Right cardiac atrium (tissue), 5 donors: ENCODE measurements at regions of chr6 and their contacts with region 1.

Region 1: GRCh38 chr6:31958741-31959739 is at the starts of genes NELFE and SKIC2:
- DNase-seq: peak; percentile 99
- ATAC-seq: peak; percentile 98 to 99
- H3K4me3 ChIP-seq: peak within 1 kb of the TSS; percentile 73
- H3K27ac ChIP-seq: peak within 1 kb of the TSS; percentile 67
- H3K4me1 ChIP-seq: no peaks in the 10 kb centered on the region
- H3K27me3 ChIP-seq: no peaks in the 10 kb centered on the region
- total RNA-seq, gene NELFE: 49.2 to 53.1 (median 50.9) TPM
- total RNA-seq, gene SKIC2: 36.5 to 43.1 (median 37.0) TPM

Region 2: GRCh38 chr6:31901953-31902643 is 56.9 kb before region 1 on chr6 and contains the start of gene ZBTB12:
- intact Hi-C with region 1: loop called (anchors 5 to 10 kb)
- DNase-seq: peak; percentile 91 to 97 (median 96)
- ATAC-seq: peak; percentile 82 to 89
- H3K4me3 ChIP-seq: peak within 1 kb of the TSS; percentile 78
- H3K27ac ChIP-seq: peak within 1 kb of the TSS; percentile 78
- H3K4me1 ChIP-seq: peaks cover 9% of the 10 kb centered on the region
- H3K27me3 ChIP-seq: no peaks in the 10 kb centered on the region
- total RNA-seq, gene ZBTB12: 1.6 to 5.0 (median 3.4) TPM

Region 3: GRCh38 chr6:31922942-31923341 is 36.1 kb before region 1 on chr6:
- intact Hi-C with region 1: no loop called
- DNase-seq: no peak
- ATAC-seq: no peak
- H3K4me3 ChIP-seq: no peak overlapping the region
- H3K27ac ChIP-seq: no peak overlapping the region
- H3K4me1 ChIP-seq: no peaks in the 10 kb centered on the region
- H3K27me3 ChIP-seq: no peaks in the 10 kb centered on the region

Region 4: GRCh38 chr6:32195652-32195901 is 236.5 kb after region 1 on chr6:
- intact Hi-C with region 1: no loop called
- DNase-seq: peak; percentile 100
- ATAC-seq: peak; percentile 88 to 92
- H3K4me3 ChIP-seq: no peak overlapping the region
- H3K27ac ChIP-seq: no peak overlapping the region
- H3K4me1 ChIP-seq: peaks cover 5% of the 10 kb centered on the region
- H3K27me3 ChIP-seq: no peaks in the 10 kb centered on the region